AG04450 (cell line): ENCODE measurements at regions of chr12 and their contacts with region 1.

Region 1: DNA sequence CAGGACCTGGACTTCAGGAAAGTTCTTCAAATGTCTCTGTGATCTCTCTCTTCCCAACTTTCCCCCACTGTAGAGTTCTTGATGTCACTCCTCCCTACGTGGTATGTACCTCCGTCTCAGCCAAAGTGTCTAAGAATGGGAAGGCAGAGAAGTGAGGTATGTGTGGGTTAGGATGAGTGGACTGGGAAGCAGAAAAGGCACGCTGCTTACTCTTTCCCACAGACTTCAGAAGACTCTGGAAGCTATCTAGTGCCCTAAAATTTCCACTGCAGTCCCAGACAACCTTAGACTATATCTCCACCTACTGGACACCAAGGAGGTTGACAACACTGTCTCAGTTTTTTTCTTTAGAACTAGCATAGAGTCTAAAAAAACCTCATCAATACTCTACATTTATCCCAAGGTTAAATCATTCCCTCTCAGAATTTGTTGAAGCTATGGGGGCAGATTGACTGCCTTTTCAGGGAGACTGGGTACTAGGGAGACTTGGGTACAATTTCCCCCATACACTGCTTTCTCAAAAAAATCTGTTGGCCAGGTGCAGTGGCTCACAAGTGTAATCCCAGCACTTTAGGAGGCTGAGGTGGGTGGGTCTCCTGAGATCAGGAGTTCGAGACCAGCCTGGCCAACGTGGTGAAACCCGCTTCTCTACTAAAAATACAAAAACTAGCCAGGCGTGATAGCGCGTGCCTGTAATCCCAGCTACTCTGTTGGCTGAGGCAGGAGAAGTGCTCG is 20.6 kb upstream of the ITGA5 start:
- DNase-seq: peak; percentile 60
- H3K4me3 ChIP-seq: no peak overlapping the region
- H3K27ac ChIP-seq: no peak overlapping the region
- H3K27me3 ChIP-seq: peaks cover 8% of the 10 kb centered on the region
- CTCF ChIP-seq: peak; percentile 87

Region 2: GRCh38 chr12:54404061-54405004 is 35.4 kb before region 1 on chr12:
- CTCF ChIA-PET with region 1: interaction called, 415 read pairs
- POLR2A ChIA-PET with region 1: interaction called, 15 read pairs
- DNase-seq: no peak
- H3K4me3 ChIP-seq: no peak overlapping the region
- H3K27ac ChIP-seq: no peak overlapping the region
- H3K27me3 ChIP-seq: no peaks in the 10 kb centered on the region
- CTCF ChIP-seq: peak; percentile 92

Region 3: DNA sequence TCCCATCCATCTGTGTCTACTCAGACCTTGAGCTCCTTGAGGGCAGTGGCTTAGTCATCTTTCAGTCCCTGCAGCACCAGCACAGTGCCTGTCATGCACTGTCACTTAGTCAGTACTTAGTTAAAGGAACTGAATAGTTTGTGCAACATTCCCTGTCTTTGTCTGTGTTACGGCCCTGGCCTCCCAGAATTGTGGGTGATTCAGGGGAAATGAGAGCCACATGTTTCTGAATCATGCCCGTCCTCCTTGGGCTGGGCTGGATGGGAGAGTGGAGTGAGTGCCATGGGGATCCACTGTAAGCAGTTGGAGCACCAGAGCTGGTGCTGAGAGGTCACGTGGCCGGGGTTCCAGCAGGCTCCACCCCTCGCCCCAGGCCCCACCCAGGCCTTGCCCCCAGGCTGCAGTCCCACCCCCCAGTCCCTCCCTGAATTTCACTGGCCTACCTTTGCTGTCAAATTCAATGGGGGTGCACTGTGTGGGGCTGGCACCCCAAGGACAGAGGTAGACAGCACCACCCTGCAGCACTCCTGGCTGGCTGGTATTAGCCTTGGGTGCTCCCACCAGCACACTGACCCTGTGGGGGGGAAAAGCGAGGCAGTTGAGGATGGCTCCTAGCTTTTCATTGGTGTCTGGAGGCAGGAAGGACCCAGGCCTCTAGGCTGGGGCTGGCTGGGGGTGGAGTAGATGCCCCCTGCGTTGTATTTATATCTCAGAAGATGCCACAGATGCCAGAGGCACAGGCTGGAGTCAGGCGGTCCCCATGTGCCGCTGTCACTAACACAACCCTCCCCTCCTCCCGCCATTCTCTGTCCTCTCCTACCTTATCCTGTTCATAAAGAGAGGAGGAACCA is 28.1 kb before region 1 on chr12:
- CTCF ChIA-PET with region 1: interaction called, 415 read pairs
- POLR2A ChIA-PET with region 1: no interaction called
- DNase-seq: peak; percentile 71
- H3K4me3 ChIP-seq: no peak overlapping the region
- H3K27ac ChIP-seq: peak overlapping the region; percentile 86
- H3K27me3 ChIP-seq: no peaks in the 10 kb centered on the region
- CTCF ChIP-seq: no peak

Region 4: GRCh38 chr12:54419088-54419892 is 20.4 kb before region 1 on chr12 and contains the start of gene ITGA5:
- CTCF ChIA-PET with region 1: interaction called, 39 read pairs
- POLR2A ChIA-PET with region 1: no interaction called
- DNase-seq: no peak
- H3K4me3 ChIP-seq: peak within 1 kb of the TSS; percentile 91
- H3K27ac ChIP-seq: peak within 1 kb of the TSS; percentile 83
- H3K27me3 ChIP-seq: no peaks in the 10 kb centered on the region
- CTCF ChIP-seq: no peak
- polyA plus RNA-seq, gene ITGA5: 160 and 185 TPM in 2 replicates

Region 5: DNA sequence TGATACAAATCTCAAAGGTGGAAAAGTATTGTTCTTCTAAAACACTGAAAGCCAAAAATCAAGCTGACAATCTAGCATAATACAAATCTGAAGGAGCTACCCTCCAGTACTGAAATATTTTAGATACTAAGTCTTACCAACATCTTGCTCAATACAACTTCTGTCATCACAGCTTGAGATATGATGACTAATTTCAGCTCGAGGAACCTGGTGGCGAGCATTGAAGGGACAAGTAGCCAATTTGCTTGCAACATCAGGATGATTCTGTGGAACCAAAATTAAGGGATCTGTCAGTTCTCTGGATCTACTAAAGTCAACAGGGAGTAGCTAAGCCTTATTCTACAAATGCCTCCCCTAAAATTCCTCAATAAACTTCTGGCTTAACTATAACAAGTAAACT is 23.3 kb after region 1 on chr12:
- CTCF ChIA-PET with region 1: interaction called, 10 read pairs
- POLR2A ChIA-PET with region 1: no interaction called
- DNase-seq: no peak
- H3K4me3 ChIP-seq: no peak overlapping the region
- H3K27ac ChIP-seq: no peak overlapping the region
- H3K27me3 ChIP-seq: peaks cover 44% of the 10 kb centered on the region
- CTCF ChIP-seq: no peak